ENCODE measurements at regions of chr4 and their contacts with region 1.

Region 1: DNA sequence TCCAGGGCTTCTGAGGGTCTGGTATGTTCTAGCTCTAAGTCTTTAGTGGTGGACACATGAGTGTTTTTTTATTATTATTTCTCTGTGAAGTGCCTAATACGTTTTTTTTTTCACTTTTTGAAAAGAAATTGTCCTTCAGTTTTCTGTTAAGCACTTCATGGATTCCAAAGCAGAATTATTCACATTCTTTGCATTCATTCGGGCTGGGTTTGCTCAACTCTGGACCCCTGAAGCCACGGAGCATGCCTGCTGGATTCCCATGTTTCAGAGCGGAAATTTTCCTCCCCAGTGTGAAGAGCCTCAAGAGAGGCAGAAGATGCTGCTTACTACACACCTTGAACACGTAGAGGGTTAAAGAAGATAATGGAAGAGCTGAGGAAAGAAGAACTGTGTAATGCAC is 107.5 kb downstream of the EGF start:
- DNase-seq: no peak
- ATAC-seq: no peak

Region 2: GRCh38 chr4:110310795-110311194 is 290.7 kb after region 1 on chr4:
- intact Hi-C with region 1: loop called in 1 of 2 experiments (anchors 10 kb)
- DNase-seq: no peak
- ATAC-seq: no peak